Sciatic nerve (tissue), 2 donors: ENCODE measurements at regions of chr18 and their contacts with region 1.

Region 1: GRCh38 chr18:78579854-78580577 is 399.6 kb upstream of the SALL3 start:
- DNase-seq: no peak
- ATAC-seq: no peak

Region 2: GRCh38 chr18:77223653-77224052 is 1356.4 kb before region 1 on chr18:
- intact Hi-C with region 1: no loop called
- DNase-seq: no peak
- ATAC-seq: no peak

Region 3: DNA sequence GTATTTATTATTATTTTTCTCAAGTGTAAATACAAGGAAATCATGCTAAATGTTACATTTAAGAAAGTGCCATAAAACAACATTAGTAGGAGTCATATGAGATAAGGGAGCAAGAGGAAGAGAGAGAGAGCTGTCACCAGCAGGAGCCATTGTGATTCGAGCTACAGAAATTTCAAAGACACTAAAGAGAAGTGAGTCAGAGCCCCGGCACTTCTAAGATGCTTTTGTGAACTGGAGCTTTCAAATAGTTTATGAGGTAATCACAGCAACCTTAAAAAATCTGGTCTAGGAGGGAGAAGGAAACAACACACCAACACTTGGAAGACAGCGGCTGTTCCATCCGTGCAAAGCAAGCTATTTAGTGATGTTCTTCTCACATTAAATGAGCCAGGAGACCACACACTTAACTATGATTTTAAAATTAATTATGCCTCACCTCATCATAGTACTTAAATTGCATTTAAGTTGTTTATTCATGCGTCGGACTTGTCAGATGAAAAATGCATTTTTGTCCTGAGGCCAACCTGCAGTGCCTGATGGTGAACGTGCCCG is 16.9 kb after region 1 on chr18:
- intact Hi-C with region 1: loop called (anchors 2 kb)
- DNase-seq: no peak
- ATAC-seq: no peak

Region 4: GRCh38 chr18:78607221-78607620 is 27.2 kb after region 1 on chr18:
- intact Hi-C with region 1: no loop called
- DNase-seq: no peak
- ATAC-seq: no peak